Activated T-helper 1 cell treated with anti-CD3 and anti-CD28 coated beads, Interleukin-12 subunit alpha, Interleukin-12 subunit beta, Interleukin-2, Interleukin-4 antibody, amounts not matched to agents 30 ng/mL and 10 ng/mL and 1 ng/mL, durations not matched to agents 14 hours and 24 hours and 36 hours (primary cell): ENCODE measurements at regions of chr10 and their contacts with region 1.

Region 1: DNA sequence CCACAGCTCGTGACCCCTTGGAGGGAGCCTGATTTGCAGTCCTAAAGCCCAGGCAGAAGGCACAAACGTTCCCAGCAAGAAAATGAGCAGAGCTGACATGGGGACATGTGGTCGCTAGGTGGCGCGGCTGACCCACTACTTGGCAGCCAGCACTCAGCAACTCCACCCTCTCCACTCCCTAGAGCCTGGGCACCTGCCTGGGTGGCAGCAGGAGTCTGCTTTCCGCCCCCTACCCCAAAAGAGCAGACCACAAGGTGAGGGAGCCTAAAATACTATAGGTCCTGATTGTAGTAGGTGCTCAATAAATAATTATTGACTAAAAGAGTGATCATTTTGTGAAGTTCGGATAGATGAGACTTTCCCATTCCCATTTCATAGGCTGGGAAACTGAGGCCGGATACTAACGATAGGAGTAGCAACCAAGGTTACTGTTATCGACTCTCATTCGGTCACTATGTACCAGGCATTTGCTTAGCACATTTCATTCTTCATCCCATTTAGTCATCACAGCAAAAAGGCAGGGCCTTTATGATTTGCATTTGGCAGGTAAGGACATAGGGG is 57.4 kb downstream of the NEUROG3 start:
- DNase-seq: peak; percentile 62
- H3K4me3 Mint-ChIP-seq: no peak overlapping the region
- H3K27ac Mint-ChIP-seq: no peak overlapping the region
- H3K4me1 Mint-ChIP-seq: no peaks in the 10 kb centered on the region
- H3K27me3 Mint-ChIP-seq: peaks cover 38% of the 10 kb centered on the region

Region 2: GRCh38 chr10:69439813-69440506 is 75.8 kb before region 1 on chr10:
- intact Hi-C with region 1: no loop called
- DNase-seq: no peak
- H3K4me3 Mint-ChIP-seq: no peak overlapping the region
- H3K27ac Mint-ChIP-seq: no peak overlapping the region
- H3K4me1 Mint-ChIP-seq: no peaks in the 10 kb centered on the region
- H3K27me3 Mint-ChIP-seq: peaks cover 12% of the 10 kb centered on the region

Region 3: GRCh38 chr10:69639291-69640195 is 123.8 kb after region 1 on chr10:
- intact Hi-C with region 1: loop called (anchors 1 kb)
- DNase-seq: peak; percentile 38
- H3K4me3 Mint-ChIP-seq: no peak overlapping the region
- H3K27ac Mint-ChIP-seq: no peak overlapping the region
- H3K4me1 Mint-ChIP-seq: no peaks in the 10 kb centered on the region
- H3K27me3 Mint-ChIP-seq: peaks cover 3% of the 10 kb centered on the region

Region 4: GRCh38 chr10:69678005-69678654 is 162.4 kb after region 1 on chr10:
- intact Hi-C with region 1: no loop called
- DNase-seq: no peak
- H3K4me3 Mint-ChIP-seq: no peak overlapping the region
- H3K27ac Mint-ChIP-seq: no peak overlapping the region
- H3K4me1 Mint-ChIP-seq: no peaks in the 10 kb centered on the region
- H3K27me3 Mint-ChIP-seq: peaks cover 12% of the 10 kb centered on the region

Region 5: GRCh38 chr10:69716711-69717560 is 201.2 kb after region 1 on chr10:
- intact Hi-C with region 1: loop called (anchors 1 kb)
- DNase-seq: peak; percentile 29
- H3K4me3 Mint-ChIP-seq: no peak overlapping the region
- H3K27ac Mint-ChIP-seq: no peak overlapping the region
- H3K4me1 Mint-ChIP-seq: no peaks in the 10 kb centered on the region
- H3K27me3 Mint-ChIP-seq: no peaks in the 10 kb centered on the region

Region 6: DNA sequence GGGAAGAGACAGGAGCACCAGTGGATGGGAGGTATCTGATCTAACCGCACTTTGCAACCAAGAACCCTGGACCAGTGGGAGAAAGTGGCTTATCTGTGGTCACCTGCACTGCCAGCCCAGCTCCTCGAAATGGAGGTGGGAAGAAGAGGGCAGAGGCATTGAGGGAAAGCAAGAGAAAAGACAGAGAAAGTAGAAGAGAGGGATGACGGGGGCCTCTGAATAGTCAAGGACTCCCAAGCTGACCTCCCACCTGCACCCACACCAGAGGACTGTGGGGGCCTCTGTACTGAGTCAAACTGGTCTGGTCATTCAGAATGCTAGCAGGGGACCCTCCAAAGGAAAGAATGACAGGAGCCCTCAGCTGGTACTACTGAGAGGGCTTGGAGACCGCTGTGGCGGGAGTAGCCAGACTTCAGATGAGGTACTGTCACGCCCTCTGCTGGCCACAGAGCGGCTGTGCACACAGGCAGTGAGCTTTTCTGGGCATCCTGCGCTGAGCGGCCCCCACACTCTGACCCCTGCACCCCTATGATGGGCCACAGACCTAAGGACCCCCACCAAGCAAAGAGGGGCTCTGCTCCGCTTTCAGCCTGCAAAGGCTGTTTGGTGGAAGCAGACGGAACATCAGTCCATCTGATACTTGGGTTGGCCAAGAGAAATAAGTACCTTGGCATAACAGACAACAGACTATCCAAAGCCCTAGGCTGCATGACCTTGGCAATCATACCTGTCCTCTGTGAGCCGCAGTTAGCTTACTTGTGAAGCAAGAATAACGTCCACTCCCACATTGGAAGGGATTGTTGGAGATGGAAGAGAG is 398.8 kb after region 1 on chr10:
- intact Hi-C with region 1: loop called (anchors 5 kb)
- DNase-seq: peak; percentile 34
- H3K4me3 Mint-ChIP-seq: no peak overlapping the region
- H3K27ac Mint-ChIP-seq: no peak overlapping the region
- H3K4me1 Mint-ChIP-seq: no peaks in the 10 kb centered on the region
- H3K27me3 Mint-ChIP-seq: peaks cover 5% of the 10 kb centered on the region